Mammary epithelial cell (primary cell): ENCODE measurements at regions of chr1 and their contacts with region 1.

Region 1: GRCh38 chr1:48552420-48552819 is 80.4 kb upstream of the SPATA6 start:
- DNase-seq: peak; percentile 37
- H3K4me3 ChIP-seq: no peak overlapping the region
- H3K27ac ChIP-seq: no peak overlapping the region
- H3K4me1 ChIP-seq: peaks cover 21% of the 10 kb centered on the region
- H3K27me3 ChIP-seq: no peaks in the 10 kb centered on the region
- CTCF ChIP-seq: peak; percentile 45 to 70

Region 2: GRCh38 chr1:48084826-48085225 is 467.6 kb before region 1 on chr1:
- CTCF ChIA-PET with region 1: no interaction called
- dilution Hi-C with region 1: no loop called
- in situ Hi-C with region 1: no loop called
- intact Hi-C with region 1: no loop called
- DNase-seq: no peak
- H3K4me3 ChIP-seq: no peak overlapping the region
- H3K27ac ChIP-seq: no peak overlapping the region
- H3K4me1 ChIP-seq: no peaks in the 10 kb centered on the region
- H3K27me3 ChIP-seq: no peaks in the 10 kb centered on the region
- CTCF ChIP-seq: no peak

Region 3: GRCh38 chr1:48344373-48344772 is 208.0 kb before region 1 on chr1:
- CTCF ChIA-PET with region 1: no interaction called
- dilution Hi-C with region 1: no loop called
- in situ Hi-C with region 1: no loop called
- intact Hi-C with region 1: no loop called
- DNase-seq: no peak
- H3K4me3 ChIP-seq: no peak overlapping the region
- H3K27ac ChIP-seq: no peak overlapping the region
- H3K4me1 ChIP-seq: no peaks in the 10 kb centered on the region
- H3K27me3 ChIP-seq: no peaks in the 10 kb centered on the region
- CTCF ChIP-seq: no peak

Region 4: GRCh38 chr1:48640836-48641492 is 88.5 kb after region 1 on chr1:
- CTCF ChIA-PET with region 1: interaction called, 17 read pairs
- dilution Hi-C with region 1: no loop called
- in situ Hi-C with region 1: no loop called
- intact Hi-C with region 1: no loop called
- DNase-seq: no peak
- H3K4me3 ChIP-seq: no peak overlapping the region
- H3K27ac ChIP-seq: no peak overlapping the region
- H3K4me1 ChIP-seq: no peaks in the 10 kb centered on the region
- H3K27me3 ChIP-seq: peaks cover 5% of the 10 kb centered on the region
- CTCF ChIP-seq: no peak

Region 5: DNA sequence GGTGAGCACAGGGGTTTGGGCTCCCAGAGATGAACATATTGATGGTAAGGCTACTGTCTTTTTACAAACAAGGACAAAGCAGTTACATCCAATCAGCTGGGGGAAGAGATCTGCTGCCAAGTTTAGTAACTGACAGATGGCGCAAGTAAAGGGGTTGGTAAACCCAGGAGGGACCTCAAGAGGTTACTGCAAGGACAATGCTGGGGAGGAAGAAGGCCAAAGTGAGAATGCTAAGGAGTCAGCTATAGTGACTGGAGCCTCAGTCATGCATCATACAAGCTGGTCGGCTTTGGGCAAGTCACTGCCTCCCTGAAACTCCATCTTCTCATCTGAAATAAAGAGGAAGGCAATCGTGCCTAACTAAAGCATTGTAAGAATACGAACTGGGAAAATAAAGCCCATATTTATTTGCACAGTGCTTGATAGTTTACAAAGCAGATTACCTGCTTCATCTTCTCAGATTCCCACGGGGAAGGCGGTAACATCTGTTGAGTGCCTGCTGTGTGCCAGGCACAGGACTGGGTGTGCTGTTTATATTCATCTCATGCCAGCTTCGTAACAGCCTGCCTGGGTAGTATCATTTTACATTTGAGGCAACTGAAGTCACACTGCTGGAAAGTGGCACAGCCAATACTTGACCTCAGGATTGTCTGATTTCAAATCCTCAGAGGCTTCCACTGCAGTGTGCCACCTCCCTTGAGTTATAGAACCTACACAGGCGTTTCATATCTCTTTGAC is 109.5 kb after region 1 on chr1:
- CTCF ChIA-PET with region 1: no interaction called
- dilution Hi-C with region 1: no loop called
- in situ Hi-C with region 1: no loop called
- intact Hi-C with region 1: no loop called
- DNase-seq: no peak
- H3K4me3 ChIP-seq: no peak overlapping the region
- H3K27ac ChIP-seq: no peak overlapping the region
- H3K4me1 ChIP-seq: no peaks in the 10 kb centered on the region
- H3K27me3 ChIP-seq: no peaks in the 10 kb centered on the region
- CTCF ChIP-seq: no peak